Left ventricle myocardium inferior (tissue), 1 donor: ENCODE measurements at regions of chr18 and their contacts with region 1.

Region 1: DNA sequence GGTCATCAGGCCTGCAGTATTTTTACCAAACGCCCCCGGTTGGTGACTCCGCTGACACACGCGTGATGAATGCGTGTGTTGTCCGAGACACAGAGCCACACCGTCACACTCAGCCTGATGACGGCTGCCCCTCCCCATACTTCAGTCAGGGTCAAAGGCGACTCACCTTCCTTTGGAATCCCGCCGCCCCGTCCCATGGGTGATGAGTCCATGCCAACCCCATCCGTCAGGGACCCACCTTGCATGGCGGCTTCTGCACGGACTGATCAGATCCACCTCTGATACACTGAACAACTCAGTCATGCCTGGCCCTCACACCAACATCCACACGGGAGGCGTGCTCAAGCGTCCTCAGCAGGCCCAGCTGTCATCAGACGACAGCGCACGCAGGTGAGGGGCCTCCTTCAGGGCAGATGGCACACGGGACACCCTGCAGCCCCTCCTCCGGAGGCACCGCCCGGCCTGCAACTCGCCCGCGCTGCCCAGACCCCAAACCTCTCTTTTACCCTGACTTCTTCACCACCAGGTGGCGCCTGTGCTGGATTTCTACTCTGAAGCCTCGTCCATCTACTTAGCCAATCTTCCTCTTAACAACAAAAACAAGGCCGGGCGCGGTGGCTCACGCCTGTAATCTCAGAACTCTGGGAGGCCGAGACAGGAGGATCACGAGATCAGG is 89.2 kb downstream of the ZNF516 start:
- DNase-seq: peak; percentile 52
- H3K4me3 ChIP-seq: no peak overlapping the region
- H3K27ac ChIP-seq: no peak overlapping the region
- H3K4me1 ChIP-seq: peaks cover 27% of the 10 kb centered on the region
- H3K27me3 ChIP-seq: no peaks in the 10 kb centered on the region
- CTCF ChIP-seq: peak; percentile 71

Region 2: DNA sequence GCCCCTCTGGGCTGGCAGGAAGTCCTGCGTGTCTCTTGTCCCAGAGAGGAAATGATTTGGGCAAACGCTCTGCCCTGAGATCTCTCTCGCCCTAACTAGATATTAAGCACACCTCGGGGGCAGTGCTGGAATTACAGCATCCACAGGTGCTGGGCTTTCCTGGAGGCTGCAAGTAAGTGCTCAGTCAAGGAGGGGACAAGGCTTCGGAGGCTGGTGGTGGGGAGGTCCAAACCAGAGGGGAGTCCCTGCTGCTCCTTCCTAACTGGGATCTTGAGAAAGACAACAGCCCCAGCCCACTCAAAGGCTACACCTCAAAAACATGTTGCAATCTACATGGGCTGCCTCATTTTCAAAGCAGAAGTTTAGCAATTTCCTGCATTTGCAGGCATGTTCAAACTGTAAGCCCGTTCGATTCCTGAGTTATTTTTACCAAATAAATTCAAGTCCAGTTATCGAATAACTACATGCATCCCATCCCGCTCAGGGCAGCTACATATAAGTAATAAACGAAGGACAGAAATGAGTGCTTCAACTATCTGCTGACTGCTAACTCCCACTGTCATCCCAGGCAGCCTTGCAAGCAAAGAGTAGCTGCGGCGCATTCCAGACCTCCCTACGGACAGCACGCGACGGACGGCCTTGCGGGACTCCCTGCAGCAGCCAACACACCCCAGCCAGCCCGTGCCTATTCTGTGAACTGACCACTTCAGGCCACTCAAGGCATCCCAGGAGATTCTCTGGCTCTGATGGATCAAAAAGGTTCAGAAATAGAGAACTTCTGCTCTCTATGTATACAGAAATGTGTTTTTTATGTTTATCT is 61.8 kb after region 1 on chr18:
- intact Hi-C with region 1: no loop called
- DNase-seq: no peak
- H3K4me3 ChIP-seq: peak overlapping the region; percentile 34
- H3K27ac ChIP-seq: no peak overlapping the region
- H3K4me1 ChIP-seq: peaks cover 40% of the 10 kb centered on the region
- H3K27me3 ChIP-seq: no peaks in the 10 kb centered on the region
- CTCF ChIP-seq: no peak

Region 3: GRCh38 chr18:76620321-76621170 is 214.7 kb after region 1 on chr18:
- intact Hi-C with region 1: loop called (anchors 10 kb)
- DNase-seq: peak; percentile 64
- H3K4me3 ChIP-seq: peak overlapping the region; percentile 63
- H3K27ac ChIP-seq: peak overlapping the region; percentile 64
- H3K4me1 ChIP-seq: peaks cover 20% of the 10 kb centered on the region
- H3K27me3 ChIP-seq: peaks cover 36% of the 10 kb centered on the region
- CTCF ChIP-seq: peak; percentile 73

Region 4: DNA sequence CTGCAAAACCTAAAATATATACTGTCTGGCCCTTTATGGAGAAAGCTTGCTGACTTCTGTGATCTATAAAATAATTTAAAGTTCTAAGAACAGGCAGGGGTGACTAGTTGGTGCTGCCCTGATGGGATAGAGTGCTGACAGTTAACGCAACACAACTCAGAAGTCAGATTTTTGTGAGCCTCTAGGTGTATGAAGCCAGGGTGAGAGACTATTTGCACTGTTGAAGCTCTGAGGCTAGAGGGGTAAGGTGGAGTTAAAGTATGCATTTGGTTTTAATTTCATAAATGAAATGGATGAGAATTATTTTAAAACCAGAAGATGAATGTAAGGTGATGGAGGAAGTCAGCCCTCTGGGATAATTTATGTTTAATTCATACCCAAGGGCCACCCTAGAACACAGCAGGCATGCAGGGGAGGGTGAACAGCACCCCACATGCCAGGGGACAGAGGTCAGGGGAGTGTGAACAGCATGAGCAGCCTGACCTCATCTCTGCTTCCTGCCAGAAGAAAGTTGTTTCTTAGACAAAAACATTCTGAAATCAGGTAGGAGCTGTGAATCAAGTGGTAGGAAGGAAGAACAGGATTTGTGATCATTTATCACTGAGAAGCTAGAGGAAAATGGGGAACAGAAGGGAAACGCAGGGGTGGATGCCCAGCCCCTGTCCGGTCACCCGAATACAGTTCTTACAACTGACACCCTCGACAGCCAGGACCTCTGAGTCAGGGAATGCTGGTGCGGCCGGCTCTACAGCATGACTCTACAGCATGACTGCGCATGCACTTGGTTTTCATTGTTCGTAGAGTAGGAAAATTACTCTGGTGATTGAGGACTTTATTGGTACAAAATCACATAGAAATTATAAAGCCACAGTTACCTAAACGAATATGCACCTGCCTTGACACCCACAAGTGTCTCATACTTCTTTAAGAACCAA is 633.6 kb after region 1 on chr18:
- intact Hi-C with region 1: no loop called
- DNase-seq: no peak
- H3K4me3 ChIP-seq: no peak overlapping the region
- H3K27ac ChIP-seq: no peak overlapping the region
- H3K4me1 ChIP-seq: peaks cover 32% of the 10 kb centered on the region
- H3K27me3 ChIP-seq: no peaks in the 10 kb centered on the region
- CTCF ChIP-seq: no peak